ENCODE measurements at regions of chr20 and their contacts with region 1.

Region 1: DNA sequence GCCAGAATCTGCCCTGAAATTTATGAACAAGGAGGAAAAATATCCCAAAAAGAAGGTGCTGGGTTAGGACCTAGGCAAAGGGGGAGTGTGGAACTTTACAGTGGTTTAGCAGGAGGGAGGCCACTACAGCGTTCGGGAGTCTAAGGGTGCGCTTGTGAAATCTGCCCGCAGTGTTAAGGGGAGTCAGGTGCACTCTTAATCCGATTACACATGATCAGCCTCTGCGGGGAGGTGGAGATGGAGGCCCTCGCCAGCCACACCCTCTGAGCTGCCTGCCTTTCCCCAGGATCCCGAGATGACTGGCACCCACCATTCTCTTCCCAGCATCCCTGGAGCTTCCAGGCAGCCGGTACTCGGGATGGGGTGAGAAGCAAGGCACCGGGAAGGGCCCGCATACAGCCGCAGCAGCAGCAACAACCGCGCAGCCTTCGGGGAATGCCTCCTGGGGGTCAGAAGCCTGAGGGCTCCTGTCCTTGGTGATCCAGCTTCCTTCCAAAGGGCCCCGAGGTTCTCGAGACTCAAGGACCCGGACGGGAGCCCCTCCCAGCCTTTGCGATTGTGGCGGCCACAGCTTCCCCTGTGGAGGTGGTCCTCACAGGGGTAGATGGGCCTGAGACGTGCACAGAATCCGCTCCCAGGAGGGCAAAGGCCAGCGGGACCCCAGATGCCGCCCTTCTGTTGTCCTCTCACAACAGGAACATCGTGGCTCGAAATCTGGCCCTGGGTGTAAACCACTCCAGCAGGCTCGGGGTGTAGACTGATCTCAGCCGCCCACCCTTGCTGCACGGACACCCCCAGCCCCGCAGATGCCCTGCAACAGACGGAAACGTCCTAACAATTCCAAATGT is 57.3 kb upstream of the CST7 start:
- DNase-seq: no peak
- H3K4me3 ChIP-seq: no peak overlapping the region
- H3K27ac ChIP-seq: no peak overlapping the region
- H3K4me1 ChIP-seq: no peaks in the 10 kb centered on the region
- H3K27me3 ChIP-seq: no peaks in the 10 kb centered on the region
- CTCF ChIP-seq: no peak

Region 2: GRCh38 chr20:24808616-24809015 is 83.2 kb before region 1 on chr20:
- dilution Hi-C with region 1: no loop called
- DNase-seq: no peak
- H3K4me3 ChIP-seq: no peak overlapping the region
- H3K27ac ChIP-seq: no peak overlapping the region
- H3K4me1 ChIP-seq: no peaks in the 10 kb centered on the region
- H3K27me3 ChIP-seq: no peaks in the 10 kb centered on the region
- CTCF ChIP-seq: no peak

Region 3: DNA sequence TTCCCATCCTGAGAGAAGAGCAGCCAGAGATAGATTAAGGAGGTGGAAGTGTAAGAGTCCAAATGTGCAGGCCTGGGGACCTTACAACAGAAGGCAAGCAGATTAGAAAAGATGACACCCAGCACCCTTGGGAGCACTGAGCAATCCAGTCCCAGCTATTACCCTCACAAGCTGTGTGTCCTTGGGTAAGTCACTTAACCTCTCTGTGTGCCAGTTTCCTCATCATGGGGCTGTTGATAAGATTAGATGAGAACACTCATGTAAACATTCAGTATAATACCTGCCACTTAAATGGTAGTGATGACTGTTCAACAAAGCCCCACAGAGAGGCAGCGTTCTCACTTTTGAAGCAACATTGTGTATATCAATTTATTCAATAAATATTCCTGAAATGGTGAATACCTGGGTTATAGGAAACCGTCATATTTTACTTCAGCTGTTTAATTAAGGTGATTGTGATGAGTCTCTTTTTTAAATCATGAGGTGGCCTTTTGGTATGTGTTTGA is 57.4 kb before region 1 on chr20:
- dilution Hi-C with region 1: loop called (anchors 5 kb)
- DNase-seq: no peak
- H3K4me3 ChIP-seq: no peak overlapping the region
- H3K27ac ChIP-seq: no peak overlapping the region
- H3K4me1 ChIP-seq: peaks cover 7% of the 10 kb centered on the region
- H3K27me3 ChIP-seq: no peaks in the 10 kb centered on the region
- CTCF ChIP-seq: no peak

Region 4: DNA sequence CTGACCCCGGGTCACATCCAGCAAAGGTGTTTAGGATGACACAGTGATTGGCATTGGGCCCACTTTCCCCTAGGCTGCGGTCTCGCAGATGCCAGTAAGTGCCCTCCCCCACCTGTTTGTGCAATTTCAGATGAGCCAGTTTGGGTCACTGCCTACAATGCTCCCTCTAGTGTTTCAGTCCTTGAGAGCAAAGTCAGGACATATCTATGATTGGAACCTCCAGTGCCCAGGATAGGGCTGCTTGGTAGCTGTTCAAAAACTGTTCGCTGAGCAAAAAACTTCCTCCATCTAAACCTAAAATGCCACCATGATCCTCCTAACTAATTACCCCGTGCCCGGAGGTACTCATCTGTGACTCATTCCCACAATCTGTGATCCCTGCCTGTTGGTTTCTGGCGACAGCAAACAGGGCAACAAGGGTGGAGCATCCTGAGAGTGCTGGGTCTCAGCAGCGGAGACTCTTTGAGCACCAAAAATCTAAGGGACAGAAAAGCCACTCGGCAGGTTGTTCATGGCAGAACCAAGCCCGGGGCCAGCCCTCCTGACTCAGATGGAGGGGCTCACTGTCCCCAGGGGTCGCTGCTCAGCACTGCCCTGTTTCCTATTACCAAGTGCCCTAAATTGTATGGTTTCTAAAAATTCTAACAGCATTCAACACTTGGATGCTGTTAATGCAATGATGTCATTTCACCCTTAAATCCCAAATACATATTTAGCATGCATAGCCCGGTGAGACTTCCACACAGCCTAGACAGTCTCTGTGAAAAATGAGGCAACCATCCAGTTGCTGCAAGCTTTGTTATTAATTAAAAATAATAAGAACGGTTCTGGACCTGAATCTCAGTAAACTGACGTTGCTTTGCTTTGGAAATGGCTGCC is 185.2 kb after region 1 on chr20:
- dilution Hi-C with region 1: no loop called
- DNase-seq: peak; percentile 40
- H3K4me3 ChIP-seq: no peak overlapping the region
- H3K27ac ChIP-seq: no peak overlapping the region
- H3K4me1 ChIP-seq: peaks cover 16% of the 10 kb centered on the region
- H3K27me3 ChIP-seq: peaks cover 75% of the 10 kb centered on the region
- CTCF ChIP-seq: peak; percentile 52 to 60 (median 55)

Measured in keratinocyte (primary cell).